PC-3 (cell line): ENCODE measurements at regions of chr1 and their contacts with region 1.

Region 1: GRCh38 chr1:15796086-15796462 is 11.4 kb downstream of the UQCRHL start:
- DNase-seq: no peak
- ATAC-seq: no peak
- H3K4me3 ChIP-seq: no peak overlapping the region
- H3K27ac ChIP-seq: peak overlapping the region; percentile 94
- H3K4me1 ChIP-seq: peaks cover 60% of the 10 kb centered on the region
- H3K27me3 ChIP-seq: no peaks in the 10 kb centered on the region
- CTCF ChIP-seq: no peak

Region 2: GRCh38 chr1:14742181-14742980 is 1053.7 kb before region 1 on chr1:
- CTCF ChIA-PET with region 1: no interaction called
- POLR2A ChIA-PET with region 1: no interaction called
- intact Hi-C with region 1: no loop called
- DNase-seq: peak; percentile 96
- ATAC-seq: peak; percentile 70
- H3K4me3 ChIP-seq: peak overlapping the region; percentile 23; the same call in 1 of the 2 replicates
- H3K27ac ChIP-seq: peak overlapping the region; percentile 98
- H3K4me1 ChIP-seq: peaks cover 41% of the 10 kb centered on the region
- H3K27me3 ChIP-seq: no peaks in the 10 kb centered on the region
- CTCF ChIP-seq: no peak

Region 3: DNA sequence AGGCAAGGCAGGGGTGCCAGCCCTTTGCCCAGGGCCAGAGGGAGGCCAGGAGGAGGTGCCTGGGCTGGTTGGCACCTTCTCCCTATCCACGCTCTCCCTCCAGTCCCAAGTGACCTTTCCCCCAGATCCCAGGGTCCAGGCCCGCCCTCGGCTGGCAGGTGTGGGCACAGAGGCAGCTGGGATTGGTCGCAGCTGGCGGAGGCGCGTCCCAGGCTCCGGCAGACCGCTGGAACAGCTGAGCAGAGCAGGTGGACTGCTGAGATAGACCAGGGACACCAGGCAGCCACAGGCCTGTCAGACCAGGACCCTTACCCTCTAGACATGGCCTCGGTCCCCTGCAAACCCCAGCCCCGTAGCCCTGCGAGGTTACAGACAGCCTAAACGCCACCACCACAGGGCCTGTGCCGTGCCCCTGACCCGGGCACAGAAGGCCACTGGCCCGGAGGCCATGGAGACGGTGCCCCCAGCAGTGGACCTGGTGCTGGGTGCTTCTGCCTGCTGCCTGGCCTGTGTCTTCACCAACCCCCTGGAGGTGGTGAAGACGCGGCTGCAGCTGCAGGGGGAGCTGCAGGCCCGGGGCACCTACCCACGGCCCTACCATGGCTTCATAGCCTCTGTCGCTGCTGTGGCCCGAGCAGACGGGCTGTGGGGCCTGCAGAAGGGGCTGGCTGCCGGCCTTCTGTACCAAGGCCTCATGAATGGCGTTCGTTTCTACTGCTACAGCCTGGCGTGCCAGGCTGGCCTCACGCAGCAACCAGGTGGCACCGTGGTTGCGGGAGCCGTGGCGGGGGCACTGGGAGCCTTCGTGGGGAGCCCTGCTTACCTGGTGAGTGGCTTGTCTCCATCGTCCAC is 59.8 kb before region 1 on chr1 and contains the start of gene SLC25A34:
- CTCF ChIA-PET with region 1: no interaction called
- POLR2A ChIA-PET with region 1: no interaction called
- intact Hi-C with region 1: no loop called
- DNase-seq: no peak
- ATAC-seq: no peak
- H3K4me3 ChIP-seq: no peak within 1 kb of the TSS
- H3K27ac ChIP-seq: no peak within 1 kb of the TSS
- H3K4me1 ChIP-seq: no peaks in the 10 kb centered on the region
- H3K27me3 ChIP-seq: no peaks in the 10 kb centered on the region
- CTCF ChIP-seq: no peak
- total RNA-seq, gene SLC25A34: 0.44 and 2.6 TPM in 2 replicates

Region 4: GRCh38 chr1:15810073-15810472 is 14.0 kb after region 1 on chr1:
- CTCF ChIA-PET with region 1: interaction called, 6 read pairs
- POLR2A ChIA-PET with region 1: interaction called, 10 read pairs
- intact Hi-C with region 1: no loop called
- DNase-seq: no peak
- ATAC-seq: no peak
- H3K4me3 ChIP-seq: no peak overlapping the region
- H3K27ac ChIP-seq: no peak overlapping the region
- H3K4me1 ChIP-seq: peaks cover 8% of the 10 kb centered on the region
- H3K27me3 ChIP-seq: no peaks in the 10 kb centered on the region
- CTCF ChIP-seq: no peak